ENCODE measurements at regions of chr4 and their contacts with region 1.

Region 1: DNA sequence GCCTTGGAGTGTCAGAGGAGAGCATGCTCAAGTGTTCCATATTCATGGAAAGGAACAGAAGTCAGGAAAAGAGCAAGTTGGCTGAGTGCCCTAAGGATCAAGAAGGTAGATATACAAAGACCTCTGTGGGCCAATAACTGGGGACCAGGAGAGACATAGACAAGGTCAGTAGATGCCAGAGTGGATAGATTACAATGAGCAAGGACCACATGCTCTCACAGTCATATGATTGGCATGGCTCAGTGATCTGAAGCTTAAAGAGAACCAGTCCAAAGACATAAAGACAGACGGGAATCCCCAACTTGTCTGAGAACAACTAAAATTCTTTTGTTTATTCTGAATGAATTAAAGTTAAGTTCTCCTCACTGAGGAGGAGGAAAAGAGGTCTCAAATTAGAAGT is 289.7 kb downstream of the HS3ST1 start:
- DNase-seq: no peak
- ATAC-seq: peak; percentile 87
- H3K4me3 Mint-ChIP-seq: peak overlapping the region; percentile 17
- H3K27ac Mint-ChIP-seq: peak overlapping the region; percentile 54
- H3K4me1 Mint-ChIP-seq: peaks cover 64% of the 10 kb centered on the region
- H3K27me3 Mint-ChIP-seq: no peaks in the 10 kb centered on the region
- CTCF ChIP-seq: no peak

Region 2: DNA sequence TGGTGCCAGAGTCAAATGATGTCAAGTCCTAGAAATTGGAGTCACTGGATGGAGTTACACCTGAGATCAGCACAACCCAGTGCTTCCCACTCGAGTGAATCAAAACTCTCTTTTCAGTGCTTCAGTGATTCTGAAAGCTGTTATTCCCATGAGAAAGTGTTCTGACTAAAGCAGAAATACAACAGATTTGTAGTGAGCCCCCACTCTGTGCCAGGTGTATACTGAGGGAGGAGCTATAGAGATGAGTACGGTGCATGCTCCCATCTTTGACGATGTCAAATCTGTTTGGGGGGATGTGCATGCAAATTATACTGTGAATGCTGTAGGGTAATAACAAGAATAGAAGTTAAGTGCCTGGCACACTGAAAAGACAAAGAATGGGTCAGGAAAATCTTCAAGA is 40.5 kb before region 1 on chr4:
- CTCF ChIA-PET with region 1: no interaction called
- POLR2A ChIA-PET with region 1: interaction called, 3 read pairs
- intact Hi-C with region 1: loop called (anchors 1 kb)
- DNase-seq: no peak
- ATAC-seq: peak; percentile 70
- H3K4me3 Mint-ChIP-seq: peak overlapping the region; percentile 57
- H3K27ac Mint-ChIP-seq: peak overlapping the region; percentile 68
- H3K4me1 Mint-ChIP-seq: peaks cover 73% of the 10 kb centered on the region
- H3K27me3 Mint-ChIP-seq: no peaks in the 10 kb centered on the region
- CTCF ChIP-seq: no peak